Pancreas (tissue), 10 donors: ENCODE measurements at regions of chr11 and their contacts with region 1.

Region 1: GRCh38 chr11:57521116-57521515 is 5.6 kb upstream of the SLC43A1 start:
- DNase-seq: no peak
- ATAC-seq: no peak
- H3K4me3 ChIP-seq: no peak overlapping the region
- H3K27ac ChIP-seq: no peak overlapping the region
- H3K4me1 ChIP-seq: no peaks in the 10 kb centered on the region
- H3K27me3 ChIP-seq: no peaks in the 10 kb centered on the region
- CTCF ChIP-seq: no peak

Region 2: DNA sequence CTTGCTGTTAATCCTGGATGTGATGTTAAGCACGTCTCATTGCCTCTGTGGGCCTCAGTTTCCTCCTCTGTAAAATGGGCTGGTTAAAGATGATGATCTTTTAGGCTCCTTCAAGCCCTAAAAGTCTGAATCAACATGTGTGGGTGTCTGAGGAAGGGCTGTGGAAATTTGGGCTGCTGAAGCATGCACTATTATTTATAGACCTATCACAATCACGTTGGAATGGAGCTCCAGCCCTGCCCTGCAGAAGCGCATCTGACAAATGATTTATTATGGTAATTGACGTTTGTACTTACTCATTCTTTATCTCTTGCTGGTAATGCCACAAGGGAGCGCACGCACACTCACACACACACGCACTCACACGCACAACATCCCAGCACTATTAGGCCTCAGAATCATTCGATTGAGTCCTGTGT is 162.6 kb before region 1 on chr11:
- intact Hi-C with region 1: no loop called
- DNase-seq: no peak
- ATAC-seq: peak in 1 of 4 donors; percentile 20
- H3K4me3 ChIP-seq: no peak overlapping the region
- H3K27ac ChIP-seq: peak overlapping the region in 3 of 4 donors; percentile 39 to 58 (median 43)
- H3K4me1 ChIP-seq: peaks cover 0 to 8% (median 0%) of the 10 kb centered on the region in 3 donors
- H3K27me3 ChIP-seq: no peaks in the 10 kb centered on the region
- CTCF ChIP-seq: no peak

Region 3: GRCh38 chr11:57480409-57481137 is 40.5 kb before region 1 on chr11:
- intact Hi-C with region 1: loop called in 2 of 3 experiments (anchors 5 to 10 kb)
- DNase-seq: peak; percentile 57 to 88 (median 76)
- ATAC-seq: peak; percentile 22 to 40 (median 33)
- H3K4me3 ChIP-seq: no peak overlapping the region
- H3K27ac ChIP-seq: no peak overlapping the region
- H3K4me1 ChIP-seq: peaks cover 14 to 19% (median 17%) of the 10 kb centered on the region in 3 donors
- H3K27me3 ChIP-seq: no peaks in the 10 kb centered on the region
- CTCF ChIP-seq: peak; percentile 17 to 63 (median 50)